ENCODE measurements at regions of chr5 and their contacts with region 1.

Region 1: DNA sequence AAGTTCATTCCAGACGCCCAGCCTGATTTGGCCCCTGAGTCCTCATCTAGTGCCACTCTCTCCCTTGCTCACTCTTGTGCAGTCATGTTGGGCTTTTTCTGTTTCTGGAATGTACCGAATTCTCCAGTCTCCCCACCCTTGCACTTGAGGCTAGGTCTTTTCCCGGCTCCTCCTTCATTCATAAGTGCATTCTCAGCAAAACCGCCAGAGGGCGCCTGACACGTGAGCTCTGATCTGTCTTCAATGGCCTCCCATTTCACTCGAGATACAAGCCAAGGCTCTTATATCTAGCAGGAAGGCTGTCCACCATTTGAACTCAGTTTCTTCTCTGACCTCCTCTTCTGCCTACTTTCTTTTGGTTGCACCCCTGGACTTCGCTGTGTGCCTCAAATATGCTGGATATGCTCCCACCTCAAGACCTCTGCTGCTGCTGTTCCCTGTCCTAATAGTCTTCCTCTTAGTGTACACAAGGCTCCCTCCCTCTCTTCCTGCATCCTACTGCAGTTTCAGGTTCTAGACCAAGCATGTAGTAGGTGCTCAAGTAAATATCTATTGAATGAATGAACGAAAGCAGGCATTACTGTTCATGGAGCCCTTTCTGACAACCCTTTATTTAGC is 568.1 kb upstream of the WWC1 start:
- DNase-seq: peak; percentile 93
- H3K4me3 ChIP-seq: no peak overlapping the region
- H3K27ac ChIP-seq: no peak overlapping the region
- H3K4me1 ChIP-seq: no peaks in the 10 kb centered on the region
- H3K27me3 ChIP-seq: no peaks in the 10 kb centered on the region
- CTCF ChIP-seq: peak; percentile 70 to 90 (median 82)
- EP300 ChIP-seq: no peak
- POLR2A ChIP-seq: no peak

Region 2: GRCh38 chr5:168047669-168048111 is 324.3 kb after region 1 on chr5:
- intact Hi-C with region 1: loop called (anchors 2 kb)
- DNase-seq: no peak
- H3K4me3 ChIP-seq: no peak overlapping the region
- H3K27ac ChIP-seq: no peak overlapping the region
- H3K4me1 ChIP-seq: peaks cover 0 to 13% (median 8%) of the 10 kb centered on the region in 4 donors
- H3K27me3 ChIP-seq: no peaks in the 10 kb centered on the region
- CTCF ChIP-seq: peak in 1 of 3 experiments; percentile 0
- EP300 ChIP-seq: no peak
- POLR2A ChIP-seq: no peak

Region 3: GRCh38 chr5:168219515-168220410 is 496.4 kb after region 1 on chr5:
- intact Hi-C with region 1: loop called (anchors 2 kb)
- DNase-seq: no peak
- H3K4me3 ChIP-seq: peak overlapping the region in 1 of 4 donors; percentile 21
- H3K27ac ChIP-seq: no peak overlapping the region
- H3K4me1 ChIP-seq: peaks cover 3 to 7% (median 5%) of the 10 kb centered on the region in 4 donors
- H3K27me3 ChIP-seq: peaks cover 0 to 13% (median 0%) of the 10 kb centered on the region in 4 donors
- CTCF ChIP-seq: peak; percentile 81 to 90 (median 87)
- EP300 ChIP-seq: no peak
- POLR2A ChIP-seq: no peak

Measured in esophagus muscularis mucosa (tissue), 4 donors.